ENCODE measurements at regions of chr14 and their contacts with region 1.

Region 1: GRCh38 chr14:72420725-72421474 is 473.0 kb downstream of the DPF3 start:
- DNase-seq: peak; percentile 89
- ATAC-seq: peak; percentile 49
- H3K4me3 Mint-ChIP-seq: no peak overlapping the region
- H3K27ac Mint-ChIP-seq: no peak overlapping the region
- H3K4me1 Mint-ChIP-seq: peaks cover 2% of the 10 kb centered on the region
- H3K27me3 Mint-ChIP-seq: peaks cover 3% of the 10 kb centered on the region

Region 2: DNA sequence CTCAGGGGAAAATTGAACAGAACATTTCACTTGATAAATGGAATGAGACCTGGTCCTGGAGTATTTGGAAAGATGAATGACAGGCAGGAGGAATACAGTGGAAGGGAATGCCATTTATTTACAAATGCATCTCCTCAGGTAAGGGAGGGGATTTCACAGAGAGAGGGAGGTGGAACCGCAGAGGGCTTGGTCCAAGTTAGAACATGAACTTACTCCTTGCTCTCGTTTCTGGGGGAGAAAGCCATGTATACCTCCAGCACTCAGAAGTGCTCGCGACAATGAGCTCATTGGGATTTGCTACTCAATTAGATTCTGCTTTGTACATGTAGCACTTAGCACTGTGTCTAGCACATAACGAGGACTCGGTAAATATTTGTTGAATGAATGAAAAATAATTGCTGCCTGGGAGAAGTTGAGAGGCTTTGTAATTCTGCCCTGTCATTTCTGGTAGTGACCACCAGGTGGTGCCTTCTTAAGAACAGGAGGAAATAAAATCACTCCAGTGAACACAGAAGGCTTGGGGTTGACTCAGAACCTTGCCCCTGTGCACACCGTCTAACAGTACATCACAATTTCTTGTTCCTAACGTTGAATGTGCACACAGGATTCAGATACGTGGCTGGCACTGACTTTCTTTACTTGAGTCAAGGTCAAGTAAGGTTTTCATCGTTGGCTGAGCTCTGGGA is 397.0 kb before region 1 on chr14:
- CTCF ChIA-PET with region 1: interaction called, 8 read pairs
- POLR2A ChIA-PET with region 1: no interaction called
- intact Hi-C with region 1: loop called (anchors 1 kb)
- DNase-seq: peak; percentile 64
- ATAC-seq: peak; percentile 93
- H3K4me3 Mint-ChIP-seq: no peak overlapping the region
- H3K27ac Mint-ChIP-seq: no peak overlapping the region
- H3K4me1 Mint-ChIP-seq: peaks cover 8% of the 10 kb centered on the region
- H3K27me3 Mint-ChIP-seq: peaks cover 17% of the 10 kb centered on the region

Region 3: GRCh38 chr14:72104011-72104613 is 316.8 kb before region 1 on chr14:
- CTCF ChIA-PET with region 1: interaction called, 5 read pairs
- POLR2A ChIA-PET with region 1: no interaction called
- intact Hi-C with region 1: loop called (anchors 2 to 5 kb)
- DNase-seq: peak; percentile 75
- ATAC-seq: peak; percentile 64
- H3K4me3 Mint-ChIP-seq: no peak overlapping the region
- H3K27ac Mint-ChIP-seq: no peak overlapping the region
- H3K4me1 Mint-ChIP-seq: no peaks in the 10 kb centered on the region
- H3K27me3 Mint-ChIP-seq: peaks cover 7% of the 10 kb centered on the region

Region 4: GRCh38 chr14:72291908-72292688 is 128.8 kb before region 1 on chr14:
- CTCF ChIA-PET with region 1: interaction called, 3 read pairs
- POLR2A ChIA-PET with region 1: no interaction called
- intact Hi-C with region 1: loop called in 1 of 2 experiments (anchors 5 kb)
- DNase-seq: peak; percentile 18
- ATAC-seq: peak; percentile 51
- H3K4me3 Mint-ChIP-seq: no peak overlapping the region
- H3K27ac Mint-ChIP-seq: no peak overlapping the region
- H3K4me1 Mint-ChIP-seq: no peaks in the 10 kb centered on the region
- H3K27me3 Mint-ChIP-seq: peaks cover 19% of the 10 kb centered on the region

Measured in activated CD4-positive, alpha-beta T cell treated with anti-CD3 and anti-CD28 coated beads for 36 hours (primary cell).